Psoas muscle (tissue), 8 donors: ENCODE measurements at regions of chr15 and their contacts with region 1.

Region 1: GRCh38 chr15:24823473-24823872 is 131.3 kb upstream of the SNRPN start:
- DNase-seq: no peak
- ATAC-seq: no peak
- H3K4me3 ChIP-seq: no peak overlapping the region
- H3K27ac ChIP-seq: no peak overlapping the region
- H3K4me1 ChIP-seq: no peaks in the 10 kb centered on the region
- H3K27me3 ChIP-seq: peaks cover 0 to 2% (median 0%) of the 10 kb centered on the region in 3 donors
- CTCF ChIP-seq: no peak

Region 2: DNA sequence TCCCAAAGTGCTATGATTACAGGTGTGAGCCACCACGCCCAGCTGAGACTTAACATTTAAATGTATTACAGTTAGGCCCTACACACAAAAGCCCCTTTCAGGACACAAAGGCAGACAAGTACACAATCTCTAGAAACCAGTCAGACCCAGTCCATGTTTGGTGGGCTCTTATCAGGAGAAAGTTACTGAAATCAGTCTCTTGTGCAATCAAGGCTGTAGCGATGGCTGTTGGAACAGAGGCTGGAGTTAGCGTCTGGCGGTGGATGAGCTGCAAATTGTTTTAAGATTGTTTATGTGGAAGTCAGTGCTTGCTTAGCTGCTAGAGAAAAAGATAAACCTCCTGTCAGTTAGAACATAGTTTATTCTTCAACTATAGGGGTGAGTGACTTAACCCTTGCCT is 41.8 kb after region 1 on chr15:
- intact Hi-C with region 1: loop called in 1 of 2 experiments (anchors 1 kb)
- DNase-seq: no peak
- ATAC-seq: no peak
- H3K4me3 ChIP-seq: no peak overlapping the region
- H3K27ac ChIP-seq: no peak overlapping the region
- H3K4me1 ChIP-seq: no peaks in the 10 kb centered on the region
- H3K27me3 ChIP-seq: no peaks in the 10 kb centered on the region
- CTCF ChIP-seq: no peak